T-cell (primary cell): ENCODE measurements at regions of chr5 and their contacts with region 1.

Region 1: GRCh38 chr5:142748568-142749249 is 21.5 kb upstream of the ARHGAP26 start:
- DNase-seq: peak; percentile 6 to 75 (median 44)
- ATAC-seq: peak; percentile 45 to 67 (median 54)
- H3K4me3 ChIP-seq: no peak overlapping the region
- H3K4me3 Mint-ChIP-seq: no peak overlapping the region
- H3K27ac ChIP-seq: no peak overlapping the region
- H3K27ac Mint-ChIP-seq: no peak overlapping the region
- H3K4me1 ChIP-seq: no peaks in the 10 kb centered on the region
- H3K4me1 Mint-ChIP-seq: peaks cover 0 to 7% (median 4%) of the 10 kb centered on the region in 3 donors
- H3K27me3 ChIP-seq: no peaks in the 10 kb centered on the region
- H3K27me3 Mint-ChIP-seq: peaks cover 6 to 9% of the 10 kb centered on the region in 2 donors

Region 2: DNA sequence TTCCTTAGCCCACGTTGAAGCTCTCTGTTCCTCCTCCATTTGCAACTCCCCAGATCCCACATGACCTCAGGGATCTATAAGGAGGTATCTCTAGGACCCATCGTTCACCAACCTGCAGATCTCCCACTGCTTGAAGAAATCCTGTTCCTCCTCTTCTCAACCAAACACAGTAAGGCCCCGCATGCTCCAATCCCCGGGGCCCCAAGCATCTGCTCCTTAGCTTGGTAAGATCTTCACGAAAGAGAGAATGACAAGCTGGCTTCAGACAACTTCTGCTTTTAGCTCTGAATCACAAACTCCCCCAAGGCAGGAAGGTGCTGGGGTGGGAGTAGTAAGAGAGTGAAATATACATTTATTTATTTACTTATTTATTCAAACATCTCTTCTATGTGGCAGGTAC is 11.5 kb before region 1 on chr5:
- CTCF ChIA-PET with region 1: interaction called, 8 to 11 read pairs
- POLR2A ChIA-PET with region 1: no interaction called
- DNase-seq: no peak
- ATAC-seq: no peak
- H3K4me3 ChIP-seq: no peak overlapping the region
- H3K4me3 Mint-ChIP-seq: no peak overlapping the region
- H3K27ac ChIP-seq: no peak overlapping the region
- H3K27ac Mint-ChIP-seq: no peak overlapping the region
- H3K4me1 ChIP-seq: peaks cover 0 to 29% of the 10 kb centered on the region in 2 experiments
- H3K4me1 Mint-ChIP-seq: peaks cover 14 to 29% (median 25%) of the 10 kb centered on the region in 3 donors
- H3K27me3 ChIP-seq: no peaks in the 10 kb centered on the region
- H3K27me3 Mint-ChIP-seq: peaks cover 0 to 5% of the 10 kb centered on the region in 2 donors

Region 3: DNA sequence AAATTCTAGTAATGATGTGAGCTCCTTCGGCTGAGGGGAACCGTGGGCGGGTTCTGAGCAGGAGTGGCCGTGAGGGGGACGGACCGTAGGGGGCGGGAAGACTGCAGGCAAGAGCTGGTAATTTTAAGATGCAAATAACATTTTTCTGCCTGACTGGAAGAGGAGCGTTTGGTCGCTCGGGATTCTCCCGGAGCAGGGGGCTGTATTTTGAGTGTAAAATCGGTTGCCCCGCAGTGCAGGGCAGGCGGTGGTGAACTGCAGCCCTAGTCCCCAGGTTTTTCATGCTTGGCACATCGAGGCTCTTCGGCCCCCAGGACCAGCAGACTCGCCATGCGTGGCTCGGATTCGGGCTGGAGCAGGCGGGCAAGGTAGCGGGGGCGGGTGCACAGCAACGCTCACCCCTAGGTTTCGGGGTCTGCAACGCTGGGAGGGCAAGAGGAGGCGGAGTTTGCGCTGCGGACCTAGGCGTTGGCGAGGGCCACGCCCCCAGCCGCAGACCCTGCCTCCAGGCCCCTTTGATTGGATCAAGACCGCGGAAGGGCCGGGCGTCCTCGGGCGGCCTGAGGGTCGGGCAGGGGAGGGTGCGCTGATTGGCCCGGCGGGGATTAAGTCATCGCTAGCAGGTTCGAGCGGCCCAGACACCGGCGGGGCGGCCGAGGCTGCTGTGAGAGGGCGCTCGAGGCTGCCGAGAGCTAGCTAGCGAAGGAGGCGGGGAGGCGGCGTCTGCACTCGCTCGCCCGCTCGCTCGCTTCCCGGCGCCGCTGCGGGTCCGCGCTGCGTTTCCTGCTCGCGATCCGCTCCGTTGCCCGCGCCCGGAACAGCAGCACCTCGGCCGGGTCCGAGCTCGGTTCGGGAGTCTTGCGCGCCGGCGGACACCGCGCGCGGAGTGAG is 21.3 kb after region 1 on chr5 and contains the start of gene ARHGAP26:
- CTCF ChIA-PET with region 1: interaction called, 3 to 15 read pairs
- POLR2A ChIA-PET with region 1: interaction called in 1 of 2 experiments, 3 read pairs
- DNase-seq: peak; percentile 81 to 95 (median 87)
- ATAC-seq: peak; percentile 89 to 93 (median 92)
- H3K4me3 ChIP-seq: peak within 1 kb of the TSS; percentile 69 to 89
- H3K4me3 Mint-ChIP-seq: peak within 1 kb of the TSS; percentile 83 to 95 (median 91)
- H3K27ac ChIP-seq: peak within 1 kb of the TSS; percentile 67
- H3K27ac Mint-ChIP-seq: peak within 1 kb of the TSS; percentile 81 to 92
- H3K4me1 ChIP-seq: peaks cover 14 to 26% of the 10 kb centered on the region in 2 experiments
- H3K4me1 Mint-ChIP-seq: peaks cover 37 to 43% (median 40%) of the 10 kb centered on the region in 3 donors
- H3K27me3 ChIP-seq: no peaks in the 10 kb centered on the region
- H3K27me3 Mint-ChIP-seq: no peaks in the 10 kb centered on the region
- total RNA-seq, gene ARHGAP26: 22.8 to 49.3 (median 28.3) TPM

Region 4: GRCh38 chr5:142862594-142862993 is 113.9 kb after region 1 on chr5:
- CTCF ChIA-PET with region 1: interaction called, 18 to 33 read pairs
- POLR2A ChIA-PET with region 1: no interaction called
- DNase-seq: no peak
- ATAC-seq: no peak
- H3K4me3 ChIP-seq: no peak overlapping the region
- H3K4me3 Mint-ChIP-seq: no peak overlapping the region
- H3K27ac ChIP-seq: no peak overlapping the region
- H3K27ac Mint-ChIP-seq: no peak overlapping the region
- H3K4me1 ChIP-seq: peaks cover 7 to 31% of the 10 kb centered on the region in 2 experiments
- H3K4me1 Mint-ChIP-seq: peaks cover 54 to 69% (median 62%) of the 10 kb centered on the region in 3 donors
- H3K27me3 ChIP-seq: no peaks in the 10 kb centered on the region
- H3K27me3 Mint-ChIP-seq: no peaks in the 10 kb centered on the region

Region 5: GRCh38 chr5:142881076-142881783 is 132.5 kb after region 1 on chr5:
- CTCF ChIA-PET with region 1: interaction called, 26 to 41 read pairs
- POLR2A ChIA-PET with region 1: no interaction called
- DNase-seq: peak in 2 of 35 experiments; percentile 7 to 29
- ATAC-seq: no peak
- H3K4me3 ChIP-seq: no peak overlapping the region
- H3K4me3 Mint-ChIP-seq: no peak overlapping the region
- H3K27ac ChIP-seq: no peak overlapping the region
- H3K27ac Mint-ChIP-seq: no peak overlapping the region
- H3K4me1 ChIP-seq: no peaks in the 10 kb centered on the region
- H3K4me1 Mint-ChIP-seq: peaks cover 6 to 14% (median 7%) of the 10 kb centered on the region in 3 donors
- H3K27me3 ChIP-seq: no peaks in the 10 kb centered on the region
- H3K27me3 Mint-ChIP-seq: no peaks in the 10 kb centered on the region

Region 6: GRCh38 chr5:142888469-142889085 is 139.9 kb after region 1 on chr5:
- CTCF ChIA-PET with region 1: interaction called, 26 to 51 read pairs
- POLR2A ChIA-PET with region 1: no interaction called
- DNase-seq: peak in 3 of 35 experiments; percentile 8 to 54 (median 13)
- ATAC-seq: peak in 2 of 4 experiments; percentile 32 to 40
- H3K4me3 ChIP-seq: no peak overlapping the region
- H3K4me3 Mint-ChIP-seq: no peak overlapping the region
- H3K27ac ChIP-seq: no peak overlapping the region
- H3K27ac Mint-ChIP-seq: no peak overlapping the region
- H3K4me1 ChIP-seq: no peaks in the 10 kb centered on the region
- H3K4me1 Mint-ChIP-seq: peaks cover 15 to 19% (median 18%) of the 10 kb centered on the region in 3 donors
- H3K27me3 ChIP-seq: no peaks in the 10 kb centered on the region
- H3K27me3 Mint-ChIP-seq: no peaks in the 10 kb centered on the region